Activated T-helper 1 cell treated with anti-CD3 and anti-CD28 coated beads, Interleukin-12 subunit alpha, Interleukin-12 subunit beta, Interleukin-2, Interleukin-4 antibody, amounts not matched to agents 30 ng/mL and 10 ng/mL and 1 ng/mL, durations not matched to agents 14 hours and 24 hours and 36 hours (primary cell): ENCODE measurements at regions of chr3 and their contacts with region 1.

Region 1: DNA sequence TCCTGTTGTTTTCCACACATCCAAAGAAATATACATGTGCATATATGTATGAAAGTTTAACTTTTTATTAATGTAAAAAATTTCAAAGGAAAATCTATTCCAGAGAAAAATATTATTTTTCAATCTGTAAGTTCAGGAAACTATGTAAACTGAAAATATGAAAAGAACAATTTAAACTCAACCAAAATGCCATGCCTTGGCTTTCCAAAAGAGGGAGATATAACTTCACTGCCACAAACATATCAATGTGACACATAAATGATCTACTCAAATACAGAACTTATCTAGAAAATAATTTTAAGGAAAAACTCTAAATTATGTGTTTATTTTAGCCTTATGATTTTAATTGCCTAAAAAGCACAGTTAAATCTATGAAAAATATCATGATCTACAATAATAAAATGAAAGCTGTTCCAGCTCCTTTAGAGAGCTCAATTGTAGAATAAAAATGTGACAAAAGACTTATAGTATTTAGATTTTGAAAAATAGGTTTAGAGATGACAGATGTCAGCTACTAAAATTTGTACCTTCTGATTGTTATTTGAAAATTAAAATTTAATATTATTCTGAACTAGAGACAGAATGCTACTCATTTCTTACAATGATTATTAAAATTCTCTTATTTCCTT is 94.8 kb downstream of the GBE1 start:
- DNase-seq: no peak
- H3K4me3 Mint-ChIP-seq: no peak overlapping the region
- H3K27ac Mint-ChIP-seq: no peak overlapping the region
- H3K4me1 Mint-ChIP-seq: no peaks in the 10 kb centered on the region
- H3K27me3 Mint-ChIP-seq: no peaks in the 10 kb centered on the region

Region 2: DNA sequence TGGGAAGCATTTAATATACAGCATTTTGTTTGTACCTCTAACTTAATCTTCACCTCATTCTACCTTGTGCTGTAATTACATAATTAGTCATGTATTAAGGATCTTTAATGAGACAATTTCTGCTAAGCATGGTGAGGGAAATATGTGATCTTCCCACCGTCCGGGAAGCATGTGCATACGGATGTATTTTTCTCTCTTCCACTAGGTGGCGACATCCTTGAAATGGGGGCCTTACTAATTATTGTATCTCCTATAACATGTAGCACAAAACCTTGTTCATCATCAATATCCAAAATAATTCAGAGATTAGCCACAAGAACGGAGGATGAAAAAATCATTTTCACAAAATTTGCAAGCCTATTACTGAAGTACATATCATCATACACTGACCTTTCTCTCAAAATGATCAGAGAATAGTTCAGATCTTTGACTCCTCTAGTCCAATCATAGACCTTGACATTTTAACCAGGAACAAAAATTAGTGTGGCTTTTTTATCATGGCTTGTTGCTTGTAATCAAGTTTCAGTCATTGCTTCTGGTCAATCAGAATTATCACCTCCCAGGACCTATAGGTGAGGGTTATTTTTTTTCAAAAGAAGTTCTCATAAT is 243.7 kb after region 1 on chr3:
- intact Hi-C with region 1: loop called (anchors 1 kb)
- DNase-seq: no peak
- H3K4me3 Mint-ChIP-seq: no peak overlapping the region
- H3K27ac Mint-ChIP-seq: no peak overlapping the region
- H3K4me1 Mint-ChIP-seq: no peaks in the 10 kb centered on the region
- H3K27me3 Mint-ChIP-seq: peaks cover 2% of the 10 kb centered on the region